Left lung (tissue), 14 donors: ENCODE measurements at regions of chr19 and their contacts with region 1.

Region 1: GRCh38 chr19:40139533-40140287 is 49.0 kb upstream of the ZNF780A start:
- DNase-seq: peak in 2 of 4 donors; percentile 31 to 49
- ATAC-seq: peak; percentile 76
- H3K4me3 ChIP-seq: no peak overlapping the region
- H3K27ac ChIP-seq: no peak overlapping the region
- H3K4me1 ChIP-seq: peaks cover 0 to 10% of the 10 kb centered on the region in 2 donors
- H3K27me3 ChIP-seq: peaks cover 0 to 18% of the 10 kb centered on the region in 2 donors
- CTCF ChIP-seq: peak; percentile 48 to 58

Region 2: GRCh38 chr19:40217027-40217810 is 77.5 kb after region 1 on chr19:
- intact Hi-C with region 1: loop called in 1 of 2 experiments (anchors 10 kb)
- DNase-seq: peak in 2 of 4 donors; percentile 56 to 88
- ATAC-seq: peak; percentile 76
- H3K4me3 ChIP-seq: no peak overlapping the region
- H3K27ac ChIP-seq: no peak overlapping the region
- H3K4me1 ChIP-seq: peaks cover 0 to 3% of the 10 kb centered on the region in 2 donors
- H3K27me3 ChIP-seq: peaks cover 24 to 66% of the 10 kb centered on the region in 2 donors
- CTCF ChIP-seq: no peak